Activated CD4-positive, alpha-beta memory T cell treated with anti-CD3 and anti-CD28 coated beads for 36 hours (primary cell): ENCODE measurements at regions of chr18 and their contacts with region 1.

Region 1: GRCh38 chr18:54284981-54285785 is 15.9 kb downstream of the POLI start:
- DNase-seq: peak; percentile 92
- H3K4me3 Mint-ChIP-seq: no peak overlapping the region
- H3K27ac Mint-ChIP-seq: peak overlapping the region; percentile 65
- H3K4me1 Mint-ChIP-seq: peaks cover 23% of the 10 kb centered on the region
- H3K27me3 Mint-ChIP-seq: no peaks in the 10 kb centered on the region

Region 2: GRCh38 chr18:53426656-53427184 is 858.5 kb before region 1 on chr18:
- CTCF ChIA-PET with region 1: no interaction called
- POLR2A ChIA-PET with region 1: no interaction called
- intact Hi-C with region 1: loop called (anchors 2 kb)
- DNase-seq: no peak
- H3K4me3 Mint-ChIP-seq: no peak overlapping the region
- H3K27ac Mint-ChIP-seq: no peak overlapping the region
- H3K4me1 Mint-ChIP-seq: no peaks in the 10 kb centered on the region
- H3K27me3 Mint-ChIP-seq: no peaks in the 10 kb centered on the region

Region 3: DNA sequence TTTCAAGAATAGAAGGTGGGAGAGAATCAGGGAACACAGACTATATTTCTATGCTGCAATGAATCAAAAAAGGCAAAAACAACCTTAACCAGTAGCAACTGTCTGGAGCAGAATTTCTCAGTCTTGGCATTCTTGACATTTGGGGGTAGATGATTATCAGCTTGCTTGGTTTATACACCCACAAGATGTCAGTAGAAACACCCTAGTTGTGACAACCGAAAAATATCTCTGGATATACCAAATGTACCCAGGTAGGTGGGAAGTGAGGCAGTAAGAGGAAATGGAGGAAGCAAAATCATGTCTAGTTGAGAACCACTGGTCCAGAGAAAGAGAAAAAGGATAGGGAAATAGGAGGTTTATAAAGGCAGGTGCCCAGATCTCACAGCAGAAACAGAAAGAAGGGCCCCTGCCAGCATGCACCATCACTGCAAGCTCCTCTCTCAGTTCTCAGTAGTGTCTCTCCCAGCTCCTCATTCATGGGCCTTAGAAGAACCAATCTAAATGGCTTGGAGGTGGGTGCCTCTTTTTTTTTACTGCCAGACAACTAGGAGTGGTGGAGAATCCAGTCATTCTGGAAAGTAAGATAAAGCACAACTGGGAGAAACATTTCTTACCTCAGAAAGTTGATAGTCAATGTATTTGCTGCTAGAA is 111.1 kb before region 1 on chr18:
- CTCF ChIA-PET with region 1: no interaction called
- POLR2A ChIA-PET with region 1: interaction called, 3 read pairs
- intact Hi-C with region 1: loop called (anchors 1 kb)
- DNase-seq: peak; percentile 26
- H3K4me3 Mint-ChIP-seq: no peak overlapping the region
- H3K27ac Mint-ChIP-seq: peak overlapping the region; percentile 79
- H3K4me1 Mint-ChIP-seq: peaks cover 47% of the 10 kb centered on the region
- H3K27me3 Mint-ChIP-seq: no peaks in the 10 kb centered on the region

Region 4: DNA sequence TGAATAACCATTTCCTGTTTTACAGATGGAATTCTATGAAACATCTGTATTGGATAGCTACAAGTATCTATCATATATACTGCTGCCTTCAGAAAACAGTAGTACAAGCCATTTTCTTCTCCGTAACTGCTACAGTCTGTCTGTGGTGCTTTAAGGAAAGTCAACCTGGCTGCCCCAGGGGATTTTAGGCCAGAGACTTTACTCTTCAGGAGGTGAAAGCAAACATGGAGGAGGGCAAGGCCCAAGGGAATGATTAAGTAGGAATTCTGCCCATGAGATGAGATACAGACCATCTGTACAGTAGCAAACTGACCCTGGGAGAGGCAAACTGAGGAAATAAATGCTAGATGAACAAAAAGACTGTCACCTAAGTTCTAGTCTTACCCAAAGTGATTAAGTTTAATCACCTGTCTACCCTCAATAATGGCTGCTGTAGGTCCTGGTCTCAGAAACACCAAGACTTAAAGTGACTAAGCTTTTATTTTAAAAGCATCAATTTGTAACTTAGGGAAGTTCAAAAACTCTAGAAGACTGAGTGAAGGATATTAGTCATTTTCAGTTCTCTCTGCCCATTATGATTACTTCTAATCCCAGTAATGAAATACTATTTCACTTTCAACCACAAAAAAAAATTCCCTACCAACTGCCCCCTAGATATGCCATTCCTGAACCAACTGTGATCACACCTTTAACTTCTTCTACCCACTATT is 75.6 kb before region 1 on chr18:
- CTCF ChIA-PET with region 1: interaction called, 3 read pairs
- POLR2A ChIA-PET with region 1: no interaction called
- intact Hi-C with region 1: loop called (anchors 1 kb)
- DNase-seq: no peak
- H3K4me3 Mint-ChIP-seq: peak overlapping the region; percentile 17
- H3K27ac Mint-ChIP-seq: peak overlapping the region; percentile 83
- H3K4me1 Mint-ChIP-seq: peaks cover 62% of the 10 kb centered on the region
- H3K27me3 Mint-ChIP-seq: no peaks in the 10 kb centered on the region

Region 5: DNA sequence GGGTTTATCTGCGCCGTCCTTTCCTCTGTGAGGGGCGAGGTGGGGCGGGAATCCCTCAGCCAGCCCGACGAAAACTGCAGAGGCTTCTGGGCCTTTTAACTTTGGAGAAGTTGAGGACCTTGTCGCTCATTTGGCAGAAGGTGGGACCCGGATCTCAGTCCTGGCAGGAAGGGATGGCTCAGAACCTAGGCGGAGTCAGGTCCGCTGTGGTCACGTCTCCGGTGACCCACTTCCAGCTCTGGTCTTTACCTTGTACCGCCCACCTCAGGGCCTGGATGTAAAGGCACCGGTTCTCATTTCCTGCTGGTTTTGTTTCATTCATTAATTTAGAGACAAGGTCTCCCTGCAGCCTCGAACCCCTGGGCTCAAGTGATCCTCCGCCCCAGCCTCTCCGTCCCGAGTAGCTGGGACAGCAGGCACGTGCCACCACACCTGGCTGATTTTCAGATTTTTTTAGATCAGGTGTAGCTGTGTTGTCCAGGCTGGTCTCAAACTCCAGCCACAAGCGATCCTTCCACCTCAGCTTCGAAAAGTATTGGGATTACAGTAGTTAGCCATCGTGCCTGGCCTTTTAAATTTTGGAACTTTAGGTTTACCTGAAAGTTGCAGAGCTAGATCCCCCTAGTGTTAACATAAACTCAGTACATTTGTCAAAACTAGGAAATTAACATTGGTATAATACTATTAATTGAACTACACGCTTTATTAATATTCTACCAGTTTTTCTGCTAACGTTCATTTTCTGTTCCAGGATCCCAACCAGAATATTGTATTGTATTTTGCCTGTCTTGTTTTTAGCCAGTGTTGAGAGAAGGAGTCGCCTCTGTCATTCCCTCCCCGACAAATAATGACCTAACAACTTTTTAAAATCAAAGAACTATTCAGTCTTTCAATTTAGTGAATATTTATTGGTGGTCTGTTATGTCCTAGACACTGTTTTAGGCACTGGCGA is 15.0 kb before region 1 on chr18:
- CTCF ChIA-PET with region 1: interaction called, 22 read pairs
- POLR2A ChIA-PET with region 1: interaction called, 16 read pairs
- intact Hi-C with region 1: loop called (anchors 1 kb)
- DNase-seq: peak; percentile 78
- H3K4me3 Mint-ChIP-seq: peak overlapping the region; percentile 78
- H3K27ac Mint-ChIP-seq: peak overlapping the region; percentile 94
- H3K4me1 Mint-ChIP-seq: peaks cover 29% of the 10 kb centered on the region
- H3K27me3 Mint-ChIP-seq: no peaks in the 10 kb centered on the region

Region 6: GRCh38 chr18:54296062-54296461 is 10.9 kb after region 1 on chr18:
- CTCF ChIA-PET with region 1: no interaction called
- POLR2A ChIA-PET with region 1: no interaction called
- intact Hi-C with region 1: no loop called
- DNase-seq: no peak
- H3K4me3 Mint-ChIP-seq: no peak overlapping the region
- H3K27ac Mint-ChIP-seq: no peak overlapping the region
- H3K4me1 Mint-ChIP-seq: no peaks in the 10 kb centered on the region
- H3K27me3 Mint-ChIP-seq: no peaks in the 10 kb centered on the region

Region 7: GRCh38 chr18:54316071-54316820 is 31.1 kb after region 1 on chr18:
- CTCF ChIA-PET with region 1: no interaction called
- POLR2A ChIA-PET with region 1: no interaction called
- intact Hi-C with region 1: no loop called
- DNase-seq: no peak
- H3K4me3 Mint-ChIP-seq: no peak overlapping the region
- H3K27ac Mint-ChIP-seq: no peak overlapping the region
- H3K4me1 Mint-ChIP-seq: no peaks in the 10 kb centered on the region
- H3K27me3 Mint-ChIP-seq: peaks cover 9% of the 10 kb centered on the region

Region 8: GRCh38 chr18:54351186-54351585 is 66.0 kb after region 1 on chr18:
- CTCF ChIA-PET with region 1: no interaction called
- POLR2A ChIA-PET with region 1: no interaction called
- intact Hi-C with region 1: no loop called
- DNase-seq: no peak
- H3K4me3 Mint-ChIP-seq: no peak overlapping the region
- H3K27ac Mint-ChIP-seq: no peak overlapping the region
- H3K4me1 Mint-ChIP-seq: no peaks in the 10 kb centered on the region
- H3K27me3 Mint-ChIP-seq: peaks cover 10% of the 10 kb centered on the region

Region 9: DNA sequence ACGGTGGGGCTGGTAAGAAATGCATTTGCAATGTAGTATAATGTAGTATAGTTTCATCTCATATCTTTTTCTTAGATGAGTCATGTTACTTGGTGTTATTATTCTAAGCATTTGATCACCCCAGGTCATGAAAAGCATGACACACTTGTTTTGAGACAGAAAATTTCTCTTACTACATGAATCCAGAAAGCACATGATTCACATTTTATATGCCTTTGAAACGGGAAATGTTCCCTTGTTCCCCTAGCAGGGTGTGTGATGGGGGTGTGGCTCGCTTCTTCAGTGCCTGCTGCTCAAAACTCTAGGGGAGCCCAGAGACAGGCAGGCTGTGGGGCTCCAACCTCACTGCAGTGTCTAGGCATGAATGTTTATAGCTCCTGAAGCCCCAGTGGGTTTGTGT is 427.1 kb after region 1 on chr18:
- CTCF ChIA-PET with region 1: no interaction called
- POLR2A ChIA-PET with region 1: no interaction called
- intact Hi-C with region 1: loop called (anchors 2 kb)
- DNase-seq: peak; percentile 40
- H3K4me3 Mint-ChIP-seq: no peak overlapping the region
- H3K27ac Mint-ChIP-seq: no peak overlapping the region
- H3K4me1 Mint-ChIP-seq: peaks cover 29% of the 10 kb centered on the region
- H3K27me3 Mint-ChIP-seq: peaks cover 5% of the 10 kb centered on the region